Ovary (tissue), 10 donors: ENCODE measurements at regions of chr3 and their contacts with region 1.

Region 1: DNA sequence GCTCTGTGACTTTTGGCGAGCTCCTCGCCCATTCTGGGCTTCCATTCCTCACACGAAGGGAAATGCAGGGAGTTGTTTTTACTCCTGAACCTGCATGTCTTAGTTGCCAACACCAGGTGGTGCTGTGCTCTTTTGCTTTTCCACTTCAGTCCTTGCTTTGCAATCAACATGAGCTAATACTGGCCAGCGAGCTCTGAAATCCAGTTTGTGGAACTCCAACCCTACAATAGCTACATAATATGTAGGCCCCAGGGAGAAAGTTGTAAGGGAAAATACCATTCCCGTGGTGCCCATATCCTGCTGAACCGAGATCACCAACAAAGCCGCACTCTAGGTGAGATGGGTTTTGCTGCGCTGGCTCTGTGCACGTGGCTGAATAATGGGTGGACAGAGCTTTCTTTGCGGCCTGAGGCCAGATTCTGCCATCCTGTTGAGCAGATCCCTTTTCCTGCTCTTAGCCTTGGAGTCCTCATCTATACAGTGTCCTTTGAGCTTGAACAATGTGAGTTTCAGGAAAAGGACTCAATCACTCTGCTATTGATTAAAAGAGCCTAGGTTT is 25.0 kb downstream of the LSM3 start:
- DNase-seq: peak; percentile 72 to 84 (median 74)
- H3K4me3 ChIP-seq: no peak overlapping the region
- H3K27ac ChIP-seq: peak overlapping the region in 1 of 2 donors; percentile 3
- H3K4me1 ChIP-seq: peaks cover 19% of the 10 kb centered on the region
- H3K27me3 ChIP-seq: no peaks in the 10 kb centered on the region
- CTCF ChIP-seq: peak; percentile 86 to 93 (median 90)
- EP300 ChIP-seq: no peak
- POLR2A ChIP-seq: no peak

Region 2: DNA sequence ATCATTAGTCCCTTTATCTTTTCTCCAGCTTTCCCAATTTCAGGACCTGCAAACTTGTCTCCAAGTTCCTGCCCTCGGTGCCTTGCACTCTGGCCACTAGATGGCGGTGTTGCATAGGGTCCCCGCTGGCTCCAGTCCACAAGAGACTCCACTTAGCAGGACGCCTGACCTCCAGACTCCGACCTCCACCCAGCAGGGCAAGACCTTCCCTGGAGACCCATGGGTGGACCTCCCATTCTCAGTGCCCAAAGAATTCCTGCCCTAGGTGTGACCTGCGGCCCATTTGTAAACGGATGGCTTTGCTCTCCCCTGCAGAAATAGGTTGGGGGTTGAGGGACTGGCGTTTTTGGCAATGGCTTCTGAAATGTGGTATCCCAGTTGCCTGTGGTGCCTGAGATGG is 57.6 kb after region 1 on chr3:
- intact Hi-C with region 1: loop called in 2 of 4 experiments (anchors 10 kb)
- DNase-seq: peak; percentile 82 to 90 (median 89)
- H3K4me3 ChIP-seq: no peak overlapping the region
- H3K27ac ChIP-seq: no peak overlapping the region
- H3K4me1 ChIP-seq: peaks cover 21% of the 10 kb centered on the region
- H3K27me3 ChIP-seq: no peaks in the 10 kb centered on the region
- CTCF ChIP-seq: peak; percentile 84 to 89 (median 85)
- EP300 ChIP-seq: no peak
- POLR2A ChIP-seq: no peak

Region 3: GRCh38 chr3:14461748-14462324 is 258.2 kb after region 1 on chr3:
- intact Hi-C with region 1: loop called (anchors 2 to 5 kb)
- DNase-seq: no peak
- H3K4me3 ChIP-seq: no peak overlapping the region
- H3K27ac ChIP-seq: peak overlapping the region; percentile 43 to 68
- H3K4me1 ChIP-seq: peaks cover 16% of the 10 kb centered on the region
- H3K27me3 ChIP-seq: no peaks in the 10 kb centered on the region
- CTCF ChIP-seq: peak in 1 of 3 donors; percentile 13
- EP300 ChIP-seq: no peak
- POLR2A ChIP-seq: no peak

Region 4: GRCh38 chr3:14467814-14468620 is 264.4 kb after region 1 on chr3:
- intact Hi-C with region 1: loop called (anchors 2 to 5 kb)
- DNase-seq: peak in 4 of 5 donors; percentile 62 to 73 (median 69)
- H3K4me3 ChIP-seq: no peak overlapping the region
- H3K27ac ChIP-seq: peak overlapping the region; percentile 44 to 65
- H3K4me1 ChIP-seq: peaks cover 18% of the 10 kb centered on the region
- H3K27me3 ChIP-seq: no peaks in the 10 kb centered on the region
- CTCF ChIP-seq: peak; percentile 50 to 94 (median 87)
- EP300 ChIP-seq: no peak
- POLR2A ChIP-seq: peak; percentile 18

Region 5: DNA sequence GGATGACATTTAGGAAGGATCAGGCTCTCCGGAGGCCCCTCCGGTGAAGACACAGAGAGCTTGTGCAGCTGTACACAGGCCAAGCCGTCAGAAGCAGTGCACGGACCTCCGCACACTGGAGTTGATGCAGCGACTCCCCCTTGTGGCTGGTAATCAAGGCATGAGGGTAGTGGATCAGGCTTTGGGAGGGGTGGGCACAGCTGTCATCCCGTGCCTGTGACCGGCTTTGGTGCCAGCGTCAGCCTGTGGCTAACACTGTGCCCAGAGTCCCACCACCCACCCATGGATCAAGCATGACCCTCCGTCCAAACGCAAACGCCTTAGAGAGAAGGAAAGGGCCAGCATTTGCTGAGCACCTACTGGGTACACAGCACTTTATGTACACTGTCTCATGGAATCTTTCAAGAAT is 344.7 kb after region 1 on chr3:
- intact Hi-C with region 1: loop called in 3 of 4 experiments (anchors 5 kb)
- DNase-seq: peak; percentile 79 to 88 (median 82)
- H3K4me3 ChIP-seq: no peak overlapping the region
- H3K27ac ChIP-seq: peak overlapping the region in 1 of 2 donors; percentile 39
- H3K4me1 ChIP-seq: peaks cover 6% of the 10 kb centered on the region
- H3K27me3 ChIP-seq: no peaks in the 10 kb centered on the region
- CTCF ChIP-seq: peak; percentile 73 to 89 (median 76)
- EP300 ChIP-seq: no peak
- POLR2A ChIP-seq: no peak